Dorsolateral prefrontal cortex (tissue), 120 donors: ENCODE measurements at regions of chr15 and their contacts with region 1.

Region 1: GRCh38 chr15:61871926-61872522 is 188.2 kb downstream of the VPS13C start:
- DNase-seq: no peak
- H3K4me3 ChIP-seq: no peak overlapping the region
- H3K27ac ChIP-seq: no peak overlapping the region
- H3K27me3 ChIP-seq: no peaks in the 10 kb centered on the region
- CTCF ChIP-seq: peak; percentile 44 to 87 (median 66)

Region 2: DNA sequence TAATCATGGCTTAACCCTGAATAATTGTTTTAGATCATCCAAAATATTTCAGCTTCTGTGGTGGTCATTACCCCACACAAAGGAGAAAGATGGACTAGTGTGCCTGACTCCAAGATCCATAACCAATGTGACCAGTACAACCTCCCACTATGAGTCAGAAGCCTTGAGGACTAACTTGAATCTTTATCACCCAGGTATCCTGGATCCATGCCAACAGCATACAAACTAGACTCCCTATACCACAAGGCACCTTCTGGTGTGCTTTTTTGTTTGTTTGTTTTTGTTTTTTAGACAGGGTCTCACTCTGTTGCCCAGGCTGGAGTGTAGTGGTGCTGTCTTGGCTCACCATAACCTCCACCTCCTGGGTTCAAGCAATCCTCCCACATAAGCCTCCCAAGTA is 129.4 kb before region 1 on chr15:
- intact Hi-C with region 1: no loop called
- DNase-seq: no peak
- H3K4me3 ChIP-seq: no peak overlapping the region
- H3K27ac ChIP-seq: no peak overlapping the region
- H3K27me3 ChIP-seq: no peaks in the 10 kb centered on the region
- CTCF ChIP-seq: no peak

Region 3: GRCh38 chr15:61834076-61834697 is 37.8 kb before region 1 on chr15:
- intact Hi-C with region 1: no loop called
- DNase-seq: peak; percentile 75 to 93 (median 86)
- H3K4me3 ChIP-seq: no peak overlapping the region
- H3K27ac ChIP-seq: no peak overlapping the region
- H3K27me3 ChIP-seq: no peaks in the 10 kb centered on the region
- CTCF ChIP-seq: peak; percentile 94 to 100 (median 99)

Region 4: DNA sequence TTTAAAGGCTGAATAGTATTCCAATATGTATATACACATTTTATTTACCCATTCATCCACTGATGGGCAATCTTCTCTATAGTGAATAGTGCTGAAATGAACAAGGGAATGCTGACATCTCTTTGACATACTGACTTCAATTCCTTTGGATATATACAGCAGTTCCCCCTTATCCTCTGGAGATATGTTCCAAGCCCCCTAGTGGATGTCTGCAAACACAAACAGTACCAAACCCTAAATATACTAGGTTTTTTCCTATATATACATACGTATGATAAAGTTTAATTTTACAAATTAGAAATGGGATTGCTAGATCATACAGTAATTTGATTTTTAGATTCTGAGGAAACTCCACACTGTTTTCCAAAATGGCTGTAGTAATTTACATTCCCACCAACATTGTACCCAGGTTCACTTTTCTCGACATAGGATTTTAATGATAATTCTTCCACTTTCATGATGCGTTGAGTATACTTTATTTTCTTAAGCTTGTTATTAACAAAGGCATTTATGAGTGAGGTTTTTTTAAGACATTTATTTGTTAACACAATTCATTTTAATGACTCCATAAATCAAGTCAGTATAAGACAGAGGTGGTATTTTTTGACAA is 150.1 kb after region 1 on chr15:
- intact Hi-C with region 1: no loop called
- DNase-seq: no peak
- H3K4me3 ChIP-seq: no peak overlapping the region
- H3K27ac ChIP-seq: no peak overlapping the region
- H3K27me3 ChIP-seq: no peaks in the 10 kb centered on the region
- CTCF ChIP-seq: peak in 10 of 56 donors; percentile 3 to 27 (median 17)

Region 5: GRCh38 chr15:62060113-62060895 is 188.3 kb after region 1 on chr15 and contains the start of gene VPS13C:
- intact Hi-C with region 1: loop called (anchors 5 kb)
- DNase-seq: peak; percentile 83 to 96 (median 88)
- H3K4me3 ChIP-seq: peak within 1 kb of the TSS; percentile 70 to 100 (median 94)
- H3K27ac ChIP-seq: peak within 1 kb of the TSS; percentile 74 to 97 (median 92)
- H3K27me3 ChIP-seq: no peaks in the 10 kb centered on the region
- CTCF ChIP-seq: peak; percentile 57 to 94 (median 82)
- total RNA-seq, gene VPS13C: 73.1 to 167 (median 126) TPM

Region 6: GRCh38 chr15:62306851-62307504 is 435.0 kb after region 1 on chr15:
- intact Hi-C with region 1: loop called in 1 of 2 experiments (anchors 10 kb)
- DNase-seq: peak in 4 of 10 donors; percentile 12 to 56 (median 35)
- H3K4me3 ChIP-seq: no peak overlapping the region
- H3K27ac ChIP-seq: no peak overlapping the region
- H3K27me3 ChIP-seq: peaks cover 0 to 4% (median 0%) of the 10 kb centered on the region in 45 donors
- CTCF ChIP-seq: peak; percentile 43 to 85 (median 72)